Gastrocnemius medialis (tissue), 4 donors: ENCODE measurements at regions of chr19 and their contacts with region 1.

Region 1: GRCh38 chr19:39679056-39679790 is 23.5 kb downstream of the LGALS16 start:
- DNase-seq: peak; percentile 55 to 75
- ATAC-seq: peak; percentile 86 to 89
- H3K4me3 ChIP-seq: peak overlapping the region; percentile 19 to 36 (median 26)
- H3K27ac ChIP-seq: peak overlapping the region; percentile 85 to 95 (median 92)
- H3K4me1 ChIP-seq: peaks cover 19 to 30% of the 10 kb centered on the region in 2 donors
- H3K27me3 ChIP-seq: no peaks in the 10 kb centered on the region
- CTCF ChIP-seq: no peak
- POLR2A ChIP-seq: peak in 1 of 2 donors; percentile 50

Region 2: DNA sequence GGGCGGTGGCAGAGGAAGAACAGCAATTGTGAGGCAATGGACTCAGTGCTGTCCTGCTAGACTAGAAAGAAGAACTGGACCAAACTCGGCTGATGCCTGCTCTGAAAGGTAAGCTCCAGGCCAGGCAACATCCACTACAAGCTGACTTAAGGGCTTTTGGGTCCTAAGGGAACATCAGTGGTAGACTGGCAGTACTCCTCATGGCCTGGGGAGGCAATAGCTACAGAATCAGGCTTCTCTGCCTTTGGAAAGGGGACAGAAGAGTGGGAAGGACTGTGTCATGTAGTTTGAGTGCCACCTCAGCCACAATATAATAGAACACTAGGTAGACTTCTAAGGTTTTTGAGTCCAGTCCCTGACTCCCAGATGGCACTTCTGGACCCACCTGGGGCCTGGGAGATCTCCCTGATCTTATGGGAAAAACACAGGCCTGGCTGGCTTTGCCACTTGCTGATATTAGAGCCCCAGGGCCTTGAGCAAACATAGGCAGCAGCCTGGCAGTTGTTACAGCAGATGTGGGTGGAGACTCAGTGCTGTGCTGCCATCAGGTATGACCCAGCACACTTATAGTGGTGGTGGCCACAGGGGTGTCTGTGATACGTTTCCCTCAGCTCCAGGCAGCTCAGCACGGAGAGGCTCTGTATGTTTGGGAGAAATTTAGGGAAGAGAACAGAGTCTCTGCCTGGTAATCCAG is 67.8 kb after region 1 on chr19:
- in situ Hi-C with region 1: no loop called
- intact Hi-C with region 1: no loop called
- DNase-seq: no peak
- ATAC-seq: no peak
- H3K4me3 ChIP-seq: no peak overlapping the region
- H3K27ac ChIP-seq: no peak overlapping the region
- H3K4me1 ChIP-seq: no peaks in the 10 kb centered on the region
- H3K27me3 ChIP-seq: peaks cover 0 to 5% (median 0%) of the 10 kb centered on the region in 3 donors
- CTCF ChIP-seq: no peak
- POLR2A ChIP-seq: no peak

Region 3: DNA sequence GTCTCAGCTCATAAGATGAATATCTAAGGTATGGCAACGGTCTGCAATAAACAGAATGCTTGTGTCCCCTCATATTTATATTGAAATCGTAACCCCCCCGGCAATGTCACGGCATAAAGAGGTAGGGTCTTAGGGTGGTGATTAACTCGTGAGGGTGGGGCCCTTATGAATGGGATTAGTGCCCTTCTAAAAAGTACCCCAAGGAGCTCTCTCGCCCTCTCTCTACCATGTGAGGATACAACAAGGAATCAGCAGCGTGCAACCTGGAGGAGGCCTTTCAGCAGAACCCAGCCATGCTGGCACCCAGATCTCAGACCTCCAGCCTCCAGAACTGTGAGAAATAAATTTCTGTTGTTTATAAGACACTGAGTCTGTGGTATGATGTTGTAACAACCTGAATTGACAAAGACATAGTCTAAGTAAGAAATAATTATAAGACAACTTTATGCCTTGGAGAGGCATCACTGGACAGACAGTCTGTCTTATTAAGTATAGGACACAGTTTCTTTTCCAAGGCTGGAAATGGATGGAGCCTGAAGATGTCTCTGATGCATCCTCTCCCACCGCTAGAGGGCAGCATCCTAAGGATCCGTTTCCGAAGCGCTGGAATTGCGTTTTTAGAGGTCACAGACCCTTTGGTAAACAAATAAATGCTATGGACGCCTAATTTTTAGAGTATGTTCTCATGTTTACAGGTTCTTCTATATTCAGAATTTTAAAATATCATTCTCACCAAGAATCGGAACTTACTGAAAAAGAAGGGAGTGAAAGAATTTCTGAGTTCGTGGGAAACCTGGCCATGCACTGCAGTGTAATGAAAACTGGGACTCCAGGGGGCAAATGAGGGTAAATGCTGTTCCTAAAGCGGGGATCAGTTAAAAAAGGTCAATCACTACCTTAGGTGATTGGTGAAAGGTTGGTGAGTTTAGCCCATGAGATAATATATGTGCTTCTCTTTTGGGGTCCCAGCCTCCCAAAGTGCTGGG is 86.2 kb after region 1 on chr19:
- in situ Hi-C with region 1: no loop called
- intact Hi-C with region 1: loop called (anchors 5 kb)
- DNase-seq: peak in 1 of 2 donors; percentile 18
- ATAC-seq: no peak
- H3K4me3 ChIP-seq: no peak overlapping the region
- H3K27ac ChIP-seq: no peak overlapping the region
- H3K4me1 ChIP-seq: peaks cover 0 to 2% of the 10 kb centered on the region in 2 donors
- H3K27me3 ChIP-seq: no peaks in the 10 kb centered on the region
- CTCF ChIP-seq: peak; percentile 34 to 70 (median 49)
- POLR2A ChIP-seq: no peak